ENCODE measurements at regions of chr3 and their contacts with region 1.

Region 1: DNA sequence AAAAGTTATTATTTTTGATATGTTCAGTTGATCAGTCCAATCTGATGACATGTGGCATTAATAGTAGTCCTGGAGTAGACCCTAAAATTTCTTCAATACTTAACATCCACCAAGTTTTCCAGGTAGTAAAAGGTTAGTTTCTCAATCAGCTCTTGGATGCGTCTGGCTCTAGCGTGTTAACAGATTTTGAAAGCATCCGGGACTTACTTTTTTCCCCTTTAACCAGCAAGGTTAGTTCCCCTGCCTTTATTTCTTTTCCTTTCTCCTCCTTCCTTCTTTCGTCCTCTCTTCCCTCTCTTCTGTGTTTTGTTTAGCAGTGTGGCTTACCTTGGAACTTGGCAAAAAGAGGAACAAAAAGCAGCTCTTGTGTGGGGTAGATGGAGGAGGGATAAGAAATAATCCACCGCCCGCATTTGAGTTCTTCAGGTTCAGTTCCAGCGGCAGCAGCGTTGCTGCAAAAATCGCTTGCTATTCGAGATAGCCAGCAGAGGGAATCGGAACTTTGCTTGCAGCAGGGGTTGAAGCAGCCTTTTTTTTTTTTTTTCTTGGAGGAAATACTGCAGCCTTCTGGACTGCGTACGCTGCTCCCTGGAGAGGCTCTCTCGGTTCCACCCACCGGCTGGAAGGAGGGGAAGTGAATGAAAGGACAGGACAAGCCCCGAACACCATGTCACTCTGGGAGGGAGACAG is at the start of gene RBMS3:
- DNase-seq: peak; percentile 67 to 69 (median 68)
- ATAC-seq: peak; percentile 90
- H3K4me3 ChIP-seq: peak within 1 kb of the TSS; percentile 4
- H3K4me1 ChIP-seq: no peaks in the 10 kb centered on the region
- CTCF ChIP-seq: no peak
- total RNA-seq, gene RBMS3: 4.6 to 53.6 (median 11.7) TPM

Region 2: DNA sequence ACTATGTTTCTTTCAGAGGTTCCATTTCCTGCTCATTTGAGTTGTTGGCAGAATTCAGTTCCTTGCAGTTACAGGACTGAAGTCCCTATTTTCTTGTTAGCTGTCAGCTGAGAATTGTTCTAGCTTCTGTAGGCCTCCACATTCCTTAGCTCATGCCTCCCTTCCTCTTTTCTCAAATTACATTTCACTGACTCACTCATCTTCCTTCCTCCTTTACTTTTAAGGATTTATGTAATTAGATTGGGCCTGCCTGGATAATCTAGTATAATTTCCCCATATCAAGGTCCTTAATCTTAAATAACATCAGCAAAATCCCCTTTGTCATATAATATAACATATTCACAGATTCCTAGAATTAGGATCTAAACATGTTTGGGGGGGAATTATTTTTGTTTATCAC is 40.3 kb before region 1 on chr3:
- intact Hi-C with region 1: no loop called
- DNase-seq: no peak
- ATAC-seq: no peak
- H3K4me3 ChIP-seq: no peak overlapping the region
- H3K4me1 ChIP-seq: no peaks in the 10 kb centered on the region
- CTCF ChIP-seq: no peak

Region 3: DNA sequence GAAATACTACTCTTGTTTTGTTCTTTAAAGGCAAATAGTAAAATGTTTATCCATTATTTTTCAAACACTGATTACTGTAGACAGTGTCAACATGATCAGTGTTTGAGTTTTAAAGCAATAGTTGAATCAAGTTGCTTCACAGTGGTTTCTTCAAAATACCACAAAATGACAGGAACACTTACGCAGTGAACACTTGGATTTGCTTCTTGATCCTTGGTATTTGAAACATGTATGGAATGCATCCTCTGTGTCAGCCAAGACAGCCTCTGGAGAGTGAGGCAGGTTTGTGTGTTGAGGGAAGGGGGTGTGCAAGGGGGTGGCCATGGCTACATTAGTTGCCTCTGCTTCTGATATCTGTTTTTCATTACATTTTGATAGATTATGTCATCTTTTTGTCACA is 413.3 kb after region 1 on chr3:
- intact Hi-C with region 1: loop called in 1 of 2 experiments (anchors 10 kb)
- DNase-seq: no peak
- ATAC-seq: no peak
- H3K4me3 ChIP-seq: no peak overlapping the region
- H3K4me1 ChIP-seq: no peaks in the 10 kb centered on the region
- CTCF ChIP-seq: no peak

Region 4: GRCh38 chr3:29764603-29765254 is 484.2 kb after region 1 on chr3:
- intact Hi-C with region 1: loop called in 1 of 2 experiments (anchors 10 kb)
- DNase-seq: no peak
- ATAC-seq: no peak
- H3K4me3 ChIP-seq: no peak overlapping the region
- H3K4me1 ChIP-seq: no peaks in the 10 kb centered on the region
- CTCF ChIP-seq: no peak